Activated CD8-positive, alpha-beta T cell treated with anti-CD3 and anti-CD28 coated beads, Interleukin-2, amount 10 ng/mL, durations not matched to agents 7 days and 5 days (primary cell): ENCODE measurements at regions of chr12 and their contacts with region 1.

Region 1: DNA sequence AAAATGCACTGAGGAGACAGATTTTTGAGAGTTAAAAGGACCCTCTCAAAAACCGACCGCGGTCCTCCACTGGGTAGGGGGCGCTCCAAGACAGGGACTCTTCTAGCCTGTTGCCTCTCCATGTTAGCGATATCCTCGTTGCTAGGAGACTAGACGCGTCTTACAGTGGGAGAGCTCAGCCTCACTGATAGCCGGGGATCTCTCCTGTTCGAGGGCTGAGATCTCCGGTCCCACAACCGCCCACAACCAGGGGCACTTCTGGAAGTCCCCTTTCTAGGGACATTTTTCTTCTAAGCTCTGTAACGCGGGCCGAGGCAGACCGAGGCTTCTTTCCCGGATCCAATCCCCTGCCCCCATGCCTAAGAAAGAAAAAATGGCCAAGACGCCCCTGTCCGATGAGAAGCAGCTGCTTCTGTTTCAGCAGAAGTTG is 21.3 kb downstream of the FKBP11 start:
- DNase-seq: peak; percentile 88
- ATAC-seq: peak; percentile 97
- H3K4me3 Mint-ChIP-seq: peak overlapping the region; percentile 64
- H3K27ac Mint-ChIP-seq: no peak overlapping the region
- H3K4me1 Mint-ChIP-seq: peaks cover 12% of the 10 kb centered on the region
- H3K27me3 Mint-ChIP-seq: peaks cover 12% of the 10 kb centered on the region

Region 2: GRCh38 chr12:48556631-48557030 is 347.4 kb before region 1 on chr12:
- CTCF ChIA-PET with region 1: no interaction called
- POLR2A ChIA-PET with region 1: no interaction called
- DNase-seq: no peak
- ATAC-seq: no peak
- H3K4me3 Mint-ChIP-seq: no peak overlapping the region
- H3K27ac Mint-ChIP-seq: no peak overlapping the region
- H3K4me1 Mint-ChIP-seq: no peaks in the 10 kb centered on the region
- H3K27me3 Mint-ChIP-seq: peaks cover 2% of the 10 kb centered on the region

Region 3: DNA sequence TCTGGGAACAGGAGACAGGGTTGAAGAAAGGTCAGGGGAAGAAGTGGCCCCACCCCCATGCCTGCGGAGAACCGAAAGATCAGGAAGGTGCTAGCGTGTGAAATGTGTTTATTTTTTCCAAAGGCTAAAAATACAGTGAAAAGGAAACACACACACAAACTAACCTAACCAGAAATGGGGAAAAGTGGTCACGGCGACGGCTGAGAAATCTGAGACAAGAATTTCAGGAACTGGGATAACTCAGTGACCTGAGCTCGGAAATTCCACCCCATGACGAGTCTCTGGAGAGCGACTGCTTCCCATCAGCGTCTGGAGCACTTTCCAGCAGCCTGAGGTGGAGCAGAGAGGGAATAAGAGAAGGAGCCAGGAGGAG is 21.7 kb before region 1 on chr12:
- CTCF ChIA-PET with region 1: interaction called, 17 read pairs
- POLR2A ChIA-PET with region 1: no interaction called
- DNase-seq: no peak
- ATAC-seq: no peak
- H3K4me3 Mint-ChIP-seq: no peak overlapping the region
- H3K27ac Mint-ChIP-seq: no peak overlapping the region
- H3K4me1 Mint-ChIP-seq: peaks cover 7% of the 10 kb centered on the region
- H3K27me3 Mint-ChIP-seq: peaks cover 32% of the 10 kb centered on the region

Region 4: DNA sequence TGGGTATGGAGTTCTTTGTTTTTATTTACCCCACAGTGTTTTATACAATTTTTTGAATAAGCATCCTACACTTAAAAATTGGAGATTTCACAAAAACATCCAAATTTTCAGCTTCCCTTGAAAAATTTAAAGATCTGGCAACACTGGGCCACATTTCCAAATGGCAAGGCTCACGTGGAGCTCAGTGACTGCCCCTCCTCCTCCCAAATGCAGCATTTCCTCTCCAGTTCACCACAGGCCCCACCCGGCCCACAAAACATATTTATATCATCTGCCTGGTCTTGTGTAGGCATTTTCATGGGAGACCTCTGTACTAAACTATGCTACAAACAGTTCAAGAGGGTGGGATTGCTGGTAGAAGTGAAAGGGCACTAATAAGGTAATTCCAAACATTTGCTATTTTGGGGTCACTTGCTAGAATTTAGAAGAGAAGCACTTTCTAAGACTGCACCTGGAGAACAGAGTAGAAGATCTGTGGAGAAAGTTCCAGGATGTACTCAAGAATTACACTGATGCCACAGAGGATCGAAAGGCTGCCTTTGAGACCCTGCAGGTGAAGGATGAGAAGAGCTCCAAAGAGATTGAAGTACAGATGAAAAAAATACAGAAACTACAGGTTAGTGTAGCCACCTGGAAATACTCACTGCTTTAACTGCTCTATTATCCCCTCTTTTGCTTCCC is 14.0 kb after region 1 on chr12:
- CTCF ChIA-PET with region 1: interaction called, 73 read pairs
- POLR2A ChIA-PET with region 1: interaction called, 4 read pairs
- DNase-seq: peak; percentile 68
- ATAC-seq: peak; percentile 83
- H3K4me3 Mint-ChIP-seq: peak overlapping the region; percentile 75
- H3K27ac Mint-ChIP-seq: peak overlapping the region; percentile 88
- H3K4me1 Mint-ChIP-seq: peaks cover 19% of the 10 kb centered on the region
- H3K27me3 Mint-ChIP-seq: no peaks in the 10 kb centered on the region

Region 5: GRCh38 chr12:48936379-48936979 is 32.5 kb after region 1 on chr12:
- CTCF ChIA-PET with region 1: interaction called, 12 read pairs
- POLR2A ChIA-PET with region 1: no interaction called
- DNase-seq: peak; percentile 88
- ATAC-seq: peak; percentile 60
- H3K4me3 Mint-ChIP-seq: no peak overlapping the region
- H3K27ac Mint-ChIP-seq: no peak overlapping the region
- H3K4me1 Mint-ChIP-seq: peaks cover 26% of the 10 kb centered on the region
- H3K27me3 Mint-ChIP-seq: no peaks in the 10 kb centered on the region